Esophagus muscularis mucosa (tissue), 4 donors: ENCODE measurements at regions of chr17 and their contacts with region 1.

Region 1: GRCh38 chr17:68539548-68540467 is 27.6 kb downstream of the PRKAR1A start:
- DNase-seq: no peak
- H3K4me3 ChIP-seq: no peak overlapping the region
- H3K27ac ChIP-seq: no peak overlapping the region
- H3K4me1 ChIP-seq: peaks cover 0 to 15% (median 2%) of the 10 kb centered on the region in 4 donors
- H3K27me3 ChIP-seq: no peaks in the 10 kb centered on the region
- CTCF ChIP-seq: peak in 1 of 3 experiments; percentile 23
- EP300 ChIP-seq: no peak
- POLR2A ChIP-seq: no peak

Region 2: DNA sequence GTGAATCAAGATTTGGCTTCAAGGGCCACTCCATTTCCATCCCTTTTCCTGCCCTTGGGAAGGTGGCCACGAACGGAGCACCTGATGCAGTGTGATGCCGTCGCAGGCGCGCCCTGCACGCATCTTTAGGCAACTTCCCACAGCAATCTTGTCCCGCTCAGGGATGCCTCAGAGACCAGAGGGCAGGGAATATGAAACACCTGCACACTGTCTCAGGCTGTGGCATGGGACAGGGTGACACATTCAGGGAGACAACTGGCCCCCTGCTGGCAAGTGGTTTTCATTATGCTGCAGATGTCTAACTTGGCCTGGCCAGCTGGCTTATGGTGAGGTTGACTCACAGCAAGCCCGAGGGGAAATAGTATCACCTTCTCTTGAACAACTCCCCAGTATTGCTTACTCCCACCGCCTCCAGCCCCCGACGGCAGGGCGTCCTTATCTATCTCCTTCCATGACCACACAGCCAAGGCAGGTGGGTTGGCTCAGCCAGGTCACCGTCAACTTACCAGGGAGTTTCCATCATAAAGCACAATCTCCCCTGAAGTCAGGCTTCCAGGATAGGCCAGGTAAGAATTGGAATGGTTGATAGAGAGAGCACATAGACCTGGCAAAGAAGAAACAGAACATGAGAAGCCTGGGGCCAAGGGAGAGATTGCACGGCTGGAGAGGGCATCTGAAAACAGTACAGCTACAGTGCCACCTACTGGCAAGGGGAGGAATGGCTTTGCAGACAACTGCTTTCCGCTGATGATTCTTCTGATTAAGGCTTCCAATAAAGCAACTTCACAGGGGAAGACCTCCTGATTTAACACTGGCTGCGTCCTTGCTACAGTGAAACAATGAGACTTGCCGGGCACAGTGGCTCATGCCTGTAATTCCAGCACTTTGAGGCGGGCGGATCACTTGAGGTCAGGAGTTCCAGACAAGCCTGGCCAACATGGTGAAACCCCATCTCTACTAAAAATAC is 103.6 kb before region 1 on chr17:
- intact Hi-C with region 1: no loop called
- DNase-seq: peak; percentile 94
- H3K4me3 ChIP-seq: no peak overlapping the region
- H3K27ac ChIP-seq: no peak overlapping the region
- H3K4me1 ChIP-seq: peaks cover 30 to 36% (median 34%) of the 10 kb centered on the region in 4 donors
- H3K27me3 ChIP-seq: no peaks in the 10 kb centered on the region
- CTCF ChIP-seq: peak; percentile 85 to 95 (median 87)
- EP300 ChIP-seq: no peak
- POLR2A ChIP-seq: no peak

Region 3: GRCh38 chr17:68759343-68760132 is 219.7 kb after region 1 on chr17:
- intact Hi-C with region 1: loop called (anchors 5 kb)
- DNase-seq: peak; percentile 96
- H3K4me3 ChIP-seq: peak overlapping the region; percentile 26 to 43 (median 36)
- H3K27ac ChIP-seq: peak overlapping the region; percentile 14 to 67 (median 64)
- H3K4me1 ChIP-seq: peaks cover 6 to 12% (median 7%) of the 10 kb centered on the region in 4 donors
- H3K27me3 ChIP-seq: no peaks in the 10 kb centered on the region
- CTCF ChIP-seq: peak; percentile 79 to 85 (median 84)
- EP300 ChIP-seq: no peak
- POLR2A ChIP-seq: no peak